HCT116 (cell line): ENCODE measurements at regions of chr6 and their contacts with region 1.

Region 1: DNA sequence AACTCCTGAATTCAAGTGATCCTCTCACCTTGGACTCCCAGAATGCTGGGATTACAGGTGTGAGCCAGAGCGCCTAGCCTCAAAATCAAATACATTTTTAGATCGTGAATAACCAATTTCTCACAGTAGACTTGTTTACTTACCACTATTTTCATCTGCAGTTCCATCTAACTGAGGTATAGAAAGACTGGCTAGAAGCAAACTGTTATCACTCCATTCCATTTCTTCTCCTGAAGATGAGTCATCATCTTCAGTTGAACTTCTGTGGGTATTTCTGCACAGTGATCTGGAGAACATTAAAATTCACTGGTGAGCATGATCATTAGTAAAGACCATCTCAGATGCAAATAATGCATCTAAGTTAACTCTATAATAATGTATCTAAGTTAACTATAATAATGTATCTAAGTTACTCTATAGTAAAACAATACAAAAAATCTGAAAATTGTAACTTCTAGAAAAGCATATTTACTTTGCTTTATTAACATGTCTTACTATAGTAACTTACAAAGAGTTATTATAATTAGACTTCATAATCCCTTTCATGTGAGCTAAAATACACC is 105.4 kb downstream of the REV3L start:
- DNase-seq: no peak
- ATAC-seq: no peak
- H3K4me3 ChIP-seq: no peak overlapping the region
- H3K27ac ChIP-seq: no peak overlapping the region
- H3K4me1 ChIP-seq: no peaks in the 10 kb centered on the region
- H3K27me3 ChIP-seq: no peaks in the 10 kb centered on the region
- CTCF ChIP-seq: no peak
- POLR2A ChIP-seq: no peak
- RAD21 ChIP-seq: no peak

Region 2: DNA sequence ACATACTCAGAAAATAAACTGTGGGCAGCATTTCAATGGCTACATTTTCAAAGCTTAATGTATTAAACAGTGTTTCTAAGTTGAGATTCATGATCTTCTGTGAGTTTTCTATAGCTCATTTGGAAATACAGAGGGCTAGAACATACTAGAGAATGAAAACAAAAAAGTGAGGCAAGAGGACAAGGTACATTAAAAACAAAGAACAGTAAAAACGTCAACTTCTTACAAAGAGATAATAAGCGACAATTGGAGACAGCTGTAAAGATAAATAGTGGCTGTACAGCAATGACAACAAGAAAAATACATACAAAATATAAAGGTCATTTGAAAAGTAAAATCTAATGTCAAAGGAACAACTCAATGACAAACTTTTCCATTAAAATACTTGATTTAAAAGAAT is 11.0 kb after region 1 on chr6:
- CTCF ChIA-PET with region 1: no interaction called
- POLR2A ChIA-PET with region 1: no interaction called
- RAD21 ChIA-PET with region 1: no interaction called
- intact Hi-C with region 1: loop called (anchors 2 kb)
- DNase-seq: no peak
- ATAC-seq: no peak
- H3K4me3 ChIP-seq: no peak overlapping the region
- H3K27ac ChIP-seq: no peak overlapping the region
- H3K4me1 ChIP-seq: no peaks in the 10 kb centered on the region
- H3K27me3 ChIP-seq: no peaks in the 10 kb centered on the region
- CTCF ChIP-seq: no peak
- POLR2A ChIP-seq: no peak
- RAD21 ChIP-seq: no peak

Region 3: GRCh38 chr6:111950661-111951496 is 573.2 kb after region 1 on chr6:
- CTCF ChIA-PET with region 1: no interaction called
- POLR2A ChIA-PET with region 1: no interaction called
- RAD21 ChIA-PET with region 1: no interaction called
- intact Hi-C with region 1: no loop called
- DNase-seq: no peak
- ATAC-seq: no peak
- H3K4me3 ChIP-seq: no peak overlapping the region
- H3K27ac ChIP-seq: no peak overlapping the region
- H3K4me1 ChIP-seq: peaks cover 0 to 12% of the 10 kb centered on the region in 2 experiments; a peak in 1 of 4 replicates
- H3K27me3 ChIP-seq: no peaks in the 10 kb centered on the region
- CTCF ChIP-seq: no peak
- POLR2A ChIP-seq: no peak
- RAD21 ChIP-seq: no peak